Esophagus squamous epithelium (tissue), 5 donors: ENCODE measurements at regions of chr3 and their contacts with region 1.

Region 1: DNA sequence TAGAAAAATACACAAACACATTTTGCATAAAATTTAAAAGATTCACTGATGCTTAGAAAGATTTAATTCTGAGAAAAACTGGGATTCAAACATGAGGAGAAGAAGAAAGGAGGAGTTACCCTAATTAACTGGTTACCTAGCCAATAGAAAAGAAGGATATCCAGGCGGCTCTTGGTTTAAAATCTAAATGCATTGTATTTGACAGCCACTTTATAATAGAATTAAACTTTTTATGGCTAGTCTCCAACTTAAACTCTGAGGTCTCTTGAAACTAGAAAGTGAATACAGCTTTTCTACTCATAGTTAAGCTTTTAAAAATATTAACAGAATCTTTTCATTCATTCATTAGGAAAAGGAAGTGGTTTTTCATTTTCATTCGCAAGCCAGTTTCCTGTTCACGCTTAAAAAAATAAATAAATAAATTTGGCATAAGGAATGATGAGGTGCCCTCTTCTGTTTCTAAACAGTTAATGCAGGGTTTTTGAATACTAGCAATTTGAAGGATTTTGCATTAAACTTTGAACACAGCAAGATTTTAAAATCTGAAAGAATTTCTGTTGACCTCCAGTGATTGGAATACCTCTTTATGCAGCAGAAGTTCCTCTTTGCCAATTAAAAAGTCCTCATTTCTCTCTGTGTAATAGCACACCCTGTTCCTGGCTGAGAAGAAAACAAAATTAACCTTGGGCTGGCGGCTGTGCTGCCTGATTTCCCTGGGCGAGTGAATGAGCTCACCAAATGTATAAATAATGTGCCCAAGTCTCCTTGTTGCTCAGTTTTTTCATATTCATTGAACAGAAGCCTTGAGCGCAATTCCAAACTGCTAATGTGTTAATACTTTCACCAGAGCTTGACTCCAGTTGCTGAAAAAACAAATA is 105.1 kb downstream of the ZMAT3 start:
- DNase-seq: no peak
- H3K4me3 ChIP-seq: peak overlapping the region in 1 of 4 donors; percentile 34
- H3K27ac ChIP-seq: peak overlapping the region in 1 of 4 donors; percentile 34
- H3K4me1 ChIP-seq: peaks cover 0 to 12% (median 0%) of the 10 kb centered on the region in 3 donors
- H3K27me3 ChIP-seq: no peaks in the 10 kb centered on the region
- CTCF ChIP-seq: peak; percentile 24 to 68 (median 44)
- POLR2A ChIP-seq: no peak

Region 2: DNA sequence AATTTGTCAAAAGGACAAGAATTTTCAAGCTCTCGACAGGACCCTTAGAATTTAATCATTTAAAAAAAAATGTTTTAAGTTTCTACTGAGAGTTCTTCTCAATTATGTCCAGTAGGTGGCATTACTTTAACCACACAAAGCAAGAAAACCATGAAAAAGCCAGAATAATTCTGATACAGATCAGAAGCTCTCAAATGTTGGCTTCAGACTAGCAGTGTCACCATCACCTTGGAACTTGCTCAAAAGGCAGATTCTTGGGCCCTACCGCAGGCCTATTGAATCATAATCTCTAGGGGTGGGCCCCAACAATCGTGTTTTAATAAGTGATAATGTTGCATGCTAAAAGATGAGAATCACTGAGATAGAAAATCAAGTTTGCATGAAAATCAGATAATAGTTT is 529.8 kb before region 1 on chr3:
- intact Hi-C with region 1: loop called (anchors 10 kb)
- DNase-seq: no peak
- H3K4me3 ChIP-seq: no peak overlapping the region
- H3K27ac ChIP-seq: no peak overlapping the region
- H3K4me1 ChIP-seq: peaks cover 0 to 8% (median 0%) of the 10 kb centered on the region in 3 donors
- H3K27me3 ChIP-seq: no peaks in the 10 kb centered on the region
- CTCF ChIP-seq: peak in 5 of 6 experiments; percentile 36 to 63 (median 55)
- POLR2A ChIP-seq: no peak